Aorta (tissue), 5 donors: ENCODE measurements at regions of chr18 and their contacts with region 1.

Region 1: DNA sequence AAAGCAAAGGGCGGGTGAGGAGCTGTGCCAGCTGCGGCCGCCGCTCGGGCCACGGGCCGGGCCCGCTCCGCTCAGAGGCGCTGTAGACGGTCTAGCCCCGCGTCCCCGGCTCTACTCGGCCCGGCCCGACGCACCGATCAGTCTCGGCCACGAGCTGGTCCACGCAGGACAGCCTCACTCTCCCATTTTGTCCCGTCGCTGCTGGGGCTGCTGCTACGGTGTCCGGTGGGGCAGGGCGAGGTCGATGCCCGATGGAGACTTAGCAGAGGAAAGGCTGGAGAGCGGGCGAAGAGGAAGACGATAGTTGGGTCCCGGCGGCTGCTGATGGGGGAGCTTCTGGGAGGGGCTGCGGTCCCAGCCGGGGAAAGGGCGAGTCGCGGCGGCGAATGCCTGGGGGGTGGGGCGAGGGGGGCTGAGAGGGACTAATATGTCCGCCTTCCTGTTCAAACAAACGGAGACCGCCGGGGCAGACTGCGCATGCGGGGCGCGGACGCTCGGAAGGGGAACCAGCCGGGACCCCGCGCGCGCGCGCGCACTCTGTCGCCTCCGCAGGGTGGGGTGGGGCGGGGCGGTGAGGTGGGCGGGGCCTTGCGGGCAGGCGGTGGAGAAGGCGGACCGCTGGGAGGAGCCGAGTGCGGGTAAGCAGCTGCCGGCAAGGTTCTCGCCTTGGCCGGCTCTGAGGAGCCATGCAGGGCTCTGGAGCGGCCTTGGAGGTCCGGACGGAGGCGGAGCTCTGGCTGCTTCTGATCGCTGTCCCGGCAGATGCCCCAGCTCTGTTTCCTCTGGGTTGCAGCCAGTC is at the start of gene ROCK1:
- DNase-seq: peak; percentile 100
- ATAC-seq: peak; percentile 98
- H3K4me3 ChIP-seq: peak within 1 kb of the TSS; percentile 90 to 99
- H3K27ac ChIP-seq: peak within 1 kb of the TSS; percentile 86 to 98
- H3K4me1 ChIP-seq: peaks cover 4 to 6% of the 10 kb centered on the region in 2 donors
- H3K27me3 ChIP-seq: no peaks in the 10 kb centered on the region
- total RNA-seq, gene ROCK1: 98.9 to 147 TPM

Region 2: GRCh38 chr18:20971886-20972267 is 139.7 kb before region 1 on chr18:
- intact Hi-C with region 1: loop called in 1 of 2 experiments (anchors 10 kb)
- DNase-seq: no peak
- ATAC-seq: no peak
- H3K4me3 ChIP-seq: no peak overlapping the region
- H3K27ac ChIP-seq: no peak overlapping the region
- H3K4me1 ChIP-seq: no peaks in the 10 kb centered on the region
- H3K27me3 ChIP-seq: no peaks in the 10 kb centered on the region

Region 3: DNA sequence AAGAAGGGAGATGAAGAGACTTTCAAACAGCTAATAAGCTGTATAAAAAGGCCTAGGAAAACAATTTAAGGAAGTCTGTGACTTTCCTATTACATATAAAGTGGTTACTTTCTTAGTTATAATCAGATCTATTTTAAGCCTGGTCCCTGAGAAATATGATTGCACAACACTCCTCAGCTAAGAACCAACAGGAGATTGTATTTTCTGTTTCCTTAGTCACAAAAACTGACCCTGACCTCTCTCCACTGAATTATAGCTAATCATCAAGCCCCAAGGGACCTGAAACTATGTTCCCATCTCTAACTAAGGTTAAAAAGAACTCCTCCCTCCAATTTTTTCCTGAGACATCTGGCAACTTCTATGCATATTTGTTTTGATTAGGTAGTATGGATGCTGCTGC is 106.8 kb before region 1 on chr18:
- intact Hi-C with region 1: loop called (anchors 10 kb)
- DNase-seq: no peak
- ATAC-seq: peak; percentile 93
- H3K4me3 ChIP-seq: peak overlapping the region in 1 of 2 donors; percentile 26
- H3K27ac ChIP-seq: peak overlapping the region in 1 of 2 donors; percentile 28
- H3K4me1 ChIP-seq: peaks cover 0 to 3% of the 10 kb centered on the region in 2 donors
- H3K27me3 ChIP-seq: no peaks in the 10 kb centered on the region

Region 4: DNA sequence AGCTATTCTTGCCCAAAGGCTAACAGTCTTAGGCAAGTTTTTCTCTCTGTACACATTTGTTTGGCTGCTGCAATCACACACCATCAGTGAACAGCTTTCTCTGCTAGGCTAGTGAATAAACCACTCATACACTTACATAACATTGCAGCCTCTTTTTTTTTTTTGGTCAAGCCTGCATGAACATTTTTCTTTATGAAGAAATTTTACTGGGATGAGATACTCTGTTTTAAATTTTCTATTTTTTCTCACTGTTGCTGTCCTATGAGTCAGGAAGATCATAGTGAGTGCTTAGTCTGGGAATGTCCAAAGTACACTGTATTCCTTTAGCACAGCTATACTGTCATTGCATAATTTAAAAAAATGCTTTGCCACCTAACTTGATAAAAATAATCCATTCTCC is 58.4 kb before region 1 on chr18:
- intact Hi-C with region 1: loop called (anchors 10 kb)
- DNase-seq: no peak
- ATAC-seq: peak; percentile 80
- H3K4me3 ChIP-seq: no peak overlapping the region
- H3K27ac ChIP-seq: peak overlapping the region in 1 of 2 donors; percentile 10
- H3K4me1 ChIP-seq: peaks cover 7 to 15% of the 10 kb centered on the region in 2 donors
- H3K27me3 ChIP-seq: no peaks in the 10 kb centered on the region

Region 5: GRCh38 chr18:21179590-21180220 is 68.2 kb after region 1 on chr18:
- intact Hi-C with region 1: loop called in 1 of 2 experiments (anchors 10 kb)
- DNase-seq: no peak
- ATAC-seq: peak; percentile 78
- H3K4me3 ChIP-seq: no peak overlapping the region
- H3K27ac ChIP-seq: no peak overlapping the region
- H3K4me1 ChIP-seq: no peaks in the 10 kb centered on the region
- H3K27me3 ChIP-seq: no peaks in the 10 kb centered on the region

Region 6: DNA sequence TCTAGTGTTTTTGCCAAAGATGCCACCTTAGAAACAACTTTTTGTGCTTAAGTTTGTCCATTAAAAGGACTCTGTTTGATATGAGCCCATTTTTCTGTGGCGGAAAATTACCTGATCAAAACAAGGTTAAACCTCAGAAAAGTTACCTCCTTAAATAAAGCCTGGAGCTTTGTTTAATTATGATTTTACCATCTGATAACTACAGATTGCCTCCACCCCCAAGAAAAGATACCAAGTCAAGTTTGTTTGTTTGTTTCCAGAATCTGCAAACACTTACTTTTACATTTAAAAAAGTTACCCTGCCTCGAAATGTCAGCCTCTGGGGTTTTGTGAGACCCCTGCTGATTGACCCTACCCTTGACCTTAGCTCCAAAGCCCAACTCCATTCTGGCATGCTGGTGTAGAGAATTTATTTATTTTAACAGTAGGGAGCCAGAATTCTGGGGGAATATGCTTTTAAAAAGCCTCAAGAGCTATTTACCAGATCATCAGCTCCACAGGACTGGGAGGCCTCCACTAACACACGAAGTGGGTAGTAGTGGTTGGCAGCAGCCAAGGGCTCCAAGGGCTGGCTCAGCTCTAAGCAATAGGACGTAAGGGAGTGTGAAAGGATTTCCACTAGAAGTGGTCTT is 107.2 kb after region 1 on chr18:
- intact Hi-C with region 1: no loop called
- DNase-seq: no peak
- ATAC-seq: no peak
- H3K4me3 ChIP-seq: no peak overlapping the region
- H3K27ac ChIP-seq: no peak overlapping the region
- H3K4me1 ChIP-seq: no peaks in the 10 kb centered on the region
- H3K27me3 ChIP-seq: no peaks in the 10 kb centered on the region